ENCODE measurements at regions of chr17 and their contacts with region 1.

Region 1: GRCh38 chr17:42928714-42929496 is 28.3 kb downstream of the G6PC1 start:
- DNase-seq: peak; percentile 57

Region 2: DNA sequence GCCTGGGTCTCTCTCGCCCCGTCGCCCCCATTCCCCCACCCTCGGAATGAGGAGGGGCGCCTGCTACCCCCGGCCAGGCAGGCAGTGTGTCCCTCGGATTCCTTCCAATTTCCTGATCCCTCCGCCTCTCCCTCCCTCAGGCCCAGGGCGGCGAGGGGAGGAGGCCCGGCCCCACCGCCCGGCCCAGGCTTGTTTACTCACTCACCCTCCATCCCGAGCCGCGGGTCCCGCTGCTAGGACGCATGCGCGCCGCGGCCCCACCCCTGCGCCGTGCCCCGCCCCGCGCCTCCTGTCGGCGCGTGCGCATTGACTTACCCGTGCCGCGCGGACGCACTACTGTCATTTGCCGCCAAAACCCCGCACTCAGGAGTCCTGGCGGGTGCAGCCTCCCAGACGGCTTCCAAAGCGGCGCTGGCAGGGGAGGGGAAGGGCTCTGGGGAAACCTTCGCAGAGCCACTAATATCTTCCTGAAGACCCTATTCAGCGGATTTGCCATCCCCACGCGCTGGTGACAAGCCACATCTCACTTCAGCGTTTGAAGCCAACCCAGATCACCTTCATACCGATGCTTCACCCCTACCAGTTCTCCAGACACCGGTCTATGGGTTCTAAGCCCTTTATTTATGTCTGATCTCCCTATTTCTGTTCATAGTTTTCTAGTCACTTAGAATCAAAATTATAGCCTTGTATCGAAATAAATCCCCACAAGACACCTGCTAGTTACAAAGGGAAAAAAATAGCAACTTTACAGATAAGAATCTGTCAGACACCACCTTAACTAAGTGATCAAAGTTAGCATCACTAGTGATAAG is 183.9 kb before region 1 on chr17 and contains the start of gene EZH1:
- in situ Hi-C with region 1: loop called (anchors 25 kb)
- DNase-seq: peak; percentile 94